Prostate gland (tissue), 2 donors: ENCODE measurements at regions of chr5 and their contacts with region 1.

Region 1: DNA sequence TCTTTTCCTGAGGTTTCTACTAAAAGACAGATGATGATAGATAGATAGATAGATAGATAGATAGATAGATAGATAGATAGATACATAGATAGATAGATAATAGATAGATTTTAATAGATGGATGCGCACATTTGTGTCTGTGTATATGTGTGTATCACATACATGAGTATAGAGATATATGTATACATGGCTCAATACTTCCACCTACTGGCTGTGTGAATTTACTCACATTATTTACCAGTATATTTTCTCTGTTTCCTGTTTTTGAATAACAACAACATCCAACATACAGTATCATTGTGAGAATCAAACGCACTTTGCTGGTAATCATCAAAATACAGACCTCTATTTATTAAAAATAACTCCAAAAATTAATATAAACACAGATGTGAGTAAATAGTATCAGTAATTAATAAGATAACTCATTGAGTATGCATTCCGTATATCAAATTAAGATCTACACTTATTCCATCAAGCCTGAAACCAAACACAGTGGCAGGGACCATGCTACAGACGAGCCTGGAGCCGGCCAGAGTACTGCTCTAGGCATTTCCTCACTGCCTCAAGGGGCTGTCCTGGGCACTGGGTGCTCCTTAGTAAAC is 338.0 kb downstream of the SEMA5A start:
- DNase-seq: no peak
- H3K4me3 ChIP-seq: no peak overlapping the region
- H3K27ac ChIP-seq: no peak overlapping the region
- H3K4me1 ChIP-seq: no peaks in the 10 kb centered on the region
- H3K27me3 ChIP-seq: no peaks in the 10 kb centered on the region
- CTCF ChIP-seq: peak; percentile 16 to 76 (median 60)
- POLR2A ChIP-seq: no peak

Region 2: DNA sequence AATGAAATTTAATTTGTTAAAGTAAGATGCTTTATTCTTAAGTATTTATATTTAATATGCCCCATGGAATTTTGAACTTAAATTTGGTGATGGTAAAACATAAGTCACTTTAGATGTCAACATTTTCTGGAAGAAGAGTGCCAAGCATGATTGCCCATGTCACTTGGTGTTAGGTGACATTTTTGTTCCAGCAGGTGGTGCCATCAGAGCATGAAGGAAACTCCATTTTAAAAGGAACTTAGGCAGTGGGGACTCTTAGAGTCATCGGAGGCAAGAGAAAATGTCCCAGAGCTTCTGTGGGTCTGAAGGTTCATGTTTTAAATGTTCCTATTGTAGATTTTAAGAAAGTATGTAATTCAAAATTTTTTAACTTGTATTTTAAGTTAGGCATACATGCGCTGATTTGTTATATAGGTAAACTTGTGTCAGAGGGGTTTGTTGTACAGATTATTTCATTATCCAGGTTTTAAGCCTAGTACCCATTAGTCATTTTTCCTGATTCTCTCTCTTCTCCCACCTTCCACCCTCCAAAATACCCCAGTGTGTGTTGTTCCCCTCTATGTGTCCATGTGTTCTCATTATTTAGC is 451.3 kb before region 1 on chr5:
- intact Hi-C with region 1: loop called (anchors 5 kb)
- DNase-seq: peak; percentile 19
- H3K4me3 ChIP-seq: no peak overlapping the region
- H3K27ac ChIP-seq: no peak overlapping the region
- H3K4me1 ChIP-seq: no peaks in the 10 kb centered on the region
- H3K27me3 ChIP-seq: no peaks in the 10 kb centered on the region
- CTCF ChIP-seq: peak in 3 of 4 experiments; percentile 41 to 63 (median 45)
- POLR2A ChIP-seq: no peak